ENCODE measurements at regions of chr18 and their contacts with region 1.

Region 1: GRCh38 chr18:20971886-20972267 is 139.7 kb downstream of the ROCK1 start:
- DNase-seq: peak; percentile 59
- ATAC-seq: peak; percentile 73
- H3K4me3 ChIP-seq: no peak overlapping the region
- H3K27ac ChIP-seq: no peak overlapping the region
- H3K4me1 ChIP-seq: no peaks in the 10 kb centered on the region
- H3K27me3 ChIP-seq: no peaks in the 10 kb centered on the region
- CTCF ChIP-seq: peak; percentile 69

Region 2: GRCh38 chr18:21123290-21123926 is 151.5 kb after region 1 on chr18:
- CTCF ChIA-PET with region 1: no interaction called
- POLR2A ChIA-PET with region 1: no interaction called
- intact Hi-C with region 1: no loop called
- DNase-seq: no peak
- ATAC-seq: no peak
- H3K4me3 ChIP-seq: no peak overlapping the region
- H3K27ac ChIP-seq: no peak overlapping the region
- H3K4me1 ChIP-seq: no peaks in the 10 kb centered on the region
- H3K27me3 ChIP-seq: no peaks in the 10 kb centered on the region
- CTCF ChIP-seq: no peak

Region 3: DNA sequence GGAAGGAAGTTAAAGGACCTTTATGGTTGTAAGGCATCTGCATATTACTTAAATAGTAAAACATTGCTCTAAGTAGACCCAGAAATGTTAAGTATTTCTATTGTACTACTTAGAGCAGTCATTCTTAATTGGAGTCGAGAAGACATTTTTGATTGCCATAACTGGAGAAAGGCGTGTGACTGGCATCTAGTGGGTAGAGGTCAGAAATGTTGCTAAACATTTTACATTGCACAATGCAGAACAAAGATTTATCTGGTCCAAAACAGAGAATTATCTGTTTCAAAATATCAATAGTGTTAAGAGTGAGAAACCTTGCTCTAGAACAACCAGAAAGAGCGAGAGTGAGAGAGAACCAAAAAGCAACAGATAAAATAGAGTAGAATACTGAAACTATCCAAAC is 163.0 kb after region 1 on chr18:
- CTCF ChIA-PET with region 1: no interaction called
- POLR2A ChIA-PET with region 1: no interaction called
- intact Hi-C with region 1: loop called (anchors 5 kb)
- DNase-seq: peak; percentile 48
- ATAC-seq: peak; percentile 71
- H3K4me3 ChIP-seq: no peak overlapping the region
- H3K27ac ChIP-seq: no peak overlapping the region
- H3K4me1 ChIP-seq: no peaks in the 10 kb centered on the region
- H3K27me3 ChIP-seq: no peaks in the 10 kb centered on the region
- CTCF ChIP-seq: peak; percentile 67

Region 4: GRCh38 chr18:21361307-21361880 is 389.5 kb after region 1 on chr18:
- CTCF ChIA-PET with region 1: no interaction called
- POLR2A ChIA-PET with region 1: no interaction called
- intact Hi-C with region 1: no loop called
- DNase-seq: no peak
- ATAC-seq: no peak
- H3K4me3 ChIP-seq: no peak overlapping the region
- H3K27ac ChIP-seq: no peak overlapping the region
- H3K4me1 ChIP-seq: 0 out of 2 replicates have a peak, but pooled peaks cover 4% of the 10 kb centered on the region
- H3K27me3 ChIP-seq: no peaks in the 10 kb centered on the region
- CTCF ChIP-seq: no peak

Region 5: DNA sequence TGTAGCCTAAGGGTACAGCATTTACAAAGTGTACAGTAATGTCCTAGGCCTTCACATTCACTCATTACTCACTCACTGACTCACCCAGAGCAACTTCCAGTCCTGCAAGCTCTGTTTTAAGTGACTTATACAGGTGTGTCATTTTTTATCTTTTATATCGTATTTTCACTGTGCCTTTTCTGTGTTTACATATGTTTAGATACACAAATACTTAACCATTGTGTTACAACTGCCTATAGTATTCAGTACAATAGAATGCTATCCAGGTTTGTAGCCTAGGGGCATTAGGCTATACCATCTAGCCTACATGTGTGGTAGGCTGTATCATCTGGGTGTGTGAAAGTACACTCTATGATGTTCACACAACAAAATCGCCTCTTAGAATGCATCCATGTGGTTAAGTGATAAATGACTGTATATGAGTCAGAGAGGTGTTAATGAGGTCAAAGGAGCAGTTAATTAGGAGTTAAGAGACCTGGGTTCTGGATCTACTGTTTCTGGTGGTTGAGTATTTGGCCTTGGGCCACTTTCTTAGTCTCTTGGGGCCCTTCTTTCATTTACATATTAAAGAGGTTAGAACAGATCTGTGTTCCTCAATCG is 419.3 kb after region 1 on chr18:
- CTCF ChIA-PET with region 1: no interaction called
- POLR2A ChIA-PET with region 1: no interaction called
- intact Hi-C with region 1: no loop called
- DNase-seq: peak; percentile 99
- ATAC-seq: peak; percentile 86
- H3K4me3 ChIP-seq: peak overlapping the region; percentile 11; the same call in 1 of the 2 replicates
- H3K27ac ChIP-seq: peak overlapping the region; percentile 99
- H3K4me1 ChIP-seq: peaks cover 29% of the 10 kb centered on the region
- H3K27me3 ChIP-seq: no peaks in the 10 kb centered on the region
- CTCF ChIP-seq: no peak